ENCODE measurements at regions of chr19 and their contacts with region 1.

Region 1: DNA sequence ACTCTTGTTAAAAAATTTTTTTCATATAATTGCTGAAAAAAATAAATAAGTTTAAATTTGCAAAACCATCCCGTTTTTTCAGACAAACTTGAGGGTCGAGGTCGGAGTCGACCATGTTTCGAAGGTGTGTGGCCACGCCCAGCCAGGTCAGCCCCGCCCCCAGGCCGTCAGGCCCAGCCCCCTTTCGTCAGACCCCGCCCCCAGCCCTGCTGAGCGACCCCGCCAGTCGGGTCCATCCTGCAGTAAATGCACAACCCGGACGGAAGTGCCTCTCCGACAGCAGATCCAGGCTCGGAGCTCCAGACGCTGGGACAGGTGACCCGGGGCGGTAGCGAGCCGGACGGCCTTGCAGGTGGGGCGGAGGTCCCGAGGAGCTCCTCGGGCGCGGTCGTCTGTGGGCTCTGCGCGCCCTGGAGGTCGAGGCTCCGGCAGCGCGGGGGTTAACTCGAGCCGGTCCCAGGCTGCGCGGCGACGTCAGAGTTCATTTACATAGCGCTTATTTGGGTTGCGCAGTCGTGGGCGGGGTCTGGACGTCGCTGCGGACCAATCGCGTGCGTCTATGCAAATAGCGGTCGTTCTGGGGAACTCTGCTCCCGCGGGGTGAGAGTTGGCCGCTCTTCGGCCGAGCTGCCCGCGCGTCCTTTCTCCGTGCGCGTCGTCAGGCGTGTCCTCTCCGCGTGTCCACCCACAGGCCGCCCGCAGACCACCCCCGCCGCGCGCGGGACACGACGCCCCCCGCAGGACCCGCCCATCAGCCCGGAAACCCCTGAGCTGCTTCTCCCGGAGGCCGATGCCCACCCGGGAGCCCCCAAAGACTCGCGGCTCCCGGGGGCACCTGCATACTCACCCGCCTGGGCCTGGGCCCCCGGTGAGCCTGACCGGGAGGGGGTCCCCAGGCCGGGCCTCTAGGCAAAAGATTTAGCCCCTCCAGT is at the start of gene OCEL1:
- DNase-seq: peak; percentile 99
- ATAC-seq: peak; percentile 90
- H3K4me3 ChIP-seq: peak within 1 kb of the TSS; percentile 74 to 81 (median 79)
- H3K4me3 Mint-ChIP-seq: peak within 1 kb of the TSS; percentile 90
- H3K27ac ChIP-seq: peak within 1 kb of the TSS; percentile 75 to 80
- H3K27ac Mint-ChIP-seq: peak within 1 kb of the TSS; percentile 94
- H3K4me1 ChIP-seq: peaks cover 3 to 20% of the 10 kb centered on the region in 2 donors
- H3K4me1 Mint-ChIP-seq: peaks cover 12% of the 10 kb centered on the region
- H3K27me3 ChIP-seq: no peaks in the 10 kb centered on the region
- H3K27me3 Mint-ChIP-seq: no peaks in the 10 kb centered on the region
- CTCF ChIP-seq: no peak
- total RNA-seq, gene OCEL1: 30.5 and 40.4 TPM in 2 replicates

Region 2: GRCh38 chr19:16897154-16897855 is 329.0 kb before region 1 on chr19:
- CTCF ChIA-PET with region 1: no interaction called
- POLR2A ChIA-PET with region 1: no interaction called
- intact Hi-C with region 1: loop called (anchors 2 kb)
- DNase-seq: peak; percentile 85
- ATAC-seq: peak; percentile 68
- H3K4me3 ChIP-seq: peak overlapping the region in 4 of 5 experiments; percentile 47 to 84 (median 65)
- H3K4me3 Mint-ChIP-seq: peak overlapping the region; percentile 88
- H3K27ac ChIP-seq: no peak overlapping the region
- H3K27ac Mint-ChIP-seq: peak overlapping the region; percentile 46
- H3K4me1 ChIP-seq: peaks cover 35 to 51% of the 10 kb centered on the region in 2 donors
- H3K4me1 Mint-ChIP-seq: peaks cover 39% of the 10 kb centered on the region
- H3K27me3 ChIP-seq: peaks cover 0 to 11% (median 2%) of the 10 kb centered on the region in 4 experiments
- H3K27me3 Mint-ChIP-seq: no peaks in the 10 kb centered on the region
- CTCF ChIP-seq: no peak

Region 3: GRCh38 chr19:17135001-17135853 is 91.0 kb before region 1 on chr19:
- CTCF ChIA-PET with region 1: no interaction called
- POLR2A ChIA-PET with region 1: no interaction called
- intact Hi-C with region 1: loop called (anchors 5 kb)
- DNase-seq: peak; percentile 88
- ATAC-seq: peak; percentile 88
- H3K4me3 ChIP-seq: peak overlapping the region in 3 of 5 experiments; percentile 22 to 49 (median 31)
- H3K4me3 Mint-ChIP-seq: peak overlapping the region; percentile 86
- H3K27ac ChIP-seq: peak overlapping the region; percentile 87 to 95
- H3K27ac Mint-ChIP-seq: peak overlapping the region; percentile 96
- H3K4me1 ChIP-seq: peaks cover 38 to 55% of the 10 kb centered on the region in 2 donors
- H3K4me1 Mint-ChIP-seq: peaks cover 60% of the 10 kb centered on the region
- H3K27me3 ChIP-seq: no peaks in the 10 kb centered on the region
- H3K27me3 Mint-ChIP-seq: no peaks in the 10 kb centered on the region
- CTCF ChIP-seq: no peak

Region 4: DNA sequence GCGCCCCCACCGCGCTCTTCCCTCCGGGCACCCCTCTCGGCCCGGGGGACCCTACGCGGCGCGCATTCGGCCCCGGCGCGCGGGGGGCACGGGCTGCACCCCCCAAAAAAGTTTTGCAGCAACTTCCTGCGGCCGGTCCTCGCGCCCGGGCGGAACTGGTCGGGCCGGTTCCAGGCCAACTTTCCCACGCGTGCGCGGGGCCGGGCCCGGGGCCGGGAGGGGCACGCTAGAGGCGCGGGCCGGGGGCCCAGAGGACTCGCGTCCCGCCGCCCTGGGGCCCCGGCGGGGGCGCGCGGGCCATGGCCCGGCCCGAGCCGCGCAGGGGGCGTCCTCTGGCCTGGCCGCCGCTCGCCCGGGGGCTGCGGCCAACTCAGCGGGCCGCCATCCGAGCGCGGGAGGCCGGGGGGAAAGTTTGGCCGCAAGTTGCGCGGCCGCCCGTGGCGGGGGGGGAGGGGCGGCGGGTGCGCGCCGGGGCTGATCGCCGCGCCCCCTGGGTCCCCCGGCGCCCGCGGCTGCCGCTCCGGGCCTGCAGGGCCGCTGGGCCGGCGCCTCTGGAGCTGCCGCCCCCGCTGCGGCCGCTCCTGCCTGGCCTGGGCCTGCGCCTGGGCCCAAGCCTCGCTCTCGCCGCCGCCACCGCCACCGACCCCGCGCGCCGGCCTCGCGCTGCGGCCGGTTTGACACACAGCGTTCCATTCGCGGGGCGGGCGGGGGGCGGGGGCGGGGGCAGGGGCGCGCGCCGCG is 19.1 kb after region 1 on chr19 and contains the start of gene NR2F6:
- CTCF ChIA-PET with region 1: interaction called, 3 read pairs
- POLR2A ChIA-PET with region 1: interaction called, 13 read pairs
- intact Hi-C with region 1: loop called (anchors 1 kb)
- DNase-seq: peak; percentile 78
- ATAC-seq: peak; percentile 28
- H3K4me3 ChIP-seq: peak within 1 kb of the TSS; percentile 9 to 76 (median 65)
- H3K4me3 Mint-ChIP-seq: peak within 1 kb of the TSS; percentile 95
- H3K27ac ChIP-seq: peak within 1 kb of the TSS in 1 of 2 donors; percentile 38
- H3K27ac Mint-ChIP-seq: peak within 1 kb of the TSS; percentile 95
- H3K4me1 ChIP-seq: peaks cover 5 to 29% of the 10 kb centered on the region in 2 donors
- H3K4me1 Mint-ChIP-seq: peaks cover 25% of the 10 kb centered on the region
- H3K27me3 ChIP-seq: no peaks in the 10 kb centered on the region
- H3K27me3 Mint-ChIP-seq: no peaks in the 10 kb centered on the region
- CTCF ChIP-seq: no peak
- total RNA-seq, gene NR2F6: 4.9 and 5.1 TPM in 2 replicates

Region 5: GRCh38 chr19:17419621-17420466 is 193.6 kb after region 1 on chr19 and contains the start of gene MVB12A:
- CTCF ChIA-PET with region 1: no interaction called
- POLR2A ChIA-PET with region 1: no interaction called
- intact Hi-C with region 1: loop called (anchors 1 kb)
- DNase-seq: peak; percentile 98
- ATAC-seq: peak; percentile 97
- H3K4me3 ChIP-seq: peak within 1 kb of the TSS; percentile 71 to 89 (median 76)
- H3K4me3 Mint-ChIP-seq: peak within 1 kb of the TSS; percentile 96
- H3K27ac ChIP-seq: peak within 1 kb of the TSS; percentile 33 to 60
- H3K27ac Mint-ChIP-seq: peak within 1 kb of the TSS; percentile 93
- H3K4me1 ChIP-seq: peaks cover 12 to 16% of the 10 kb centered on the region in 2 donors
- H3K4me1 Mint-ChIP-seq: peaks cover 15% of the 10 kb centered on the region
- H3K27me3 ChIP-seq: no peaks in the 10 kb centered on the region
- H3K27me3 Mint-ChIP-seq: no peaks in the 10 kb centered on the region
- CTCF ChIP-seq: no peak
- total RNA-seq, gene MVB12A: 26.8 and 33.6 TPM in 2 replicates